GM12878 (cell line): ENCODE measurements at regions of chr1 and their contacts with region 1.

Region 1: DNA sequence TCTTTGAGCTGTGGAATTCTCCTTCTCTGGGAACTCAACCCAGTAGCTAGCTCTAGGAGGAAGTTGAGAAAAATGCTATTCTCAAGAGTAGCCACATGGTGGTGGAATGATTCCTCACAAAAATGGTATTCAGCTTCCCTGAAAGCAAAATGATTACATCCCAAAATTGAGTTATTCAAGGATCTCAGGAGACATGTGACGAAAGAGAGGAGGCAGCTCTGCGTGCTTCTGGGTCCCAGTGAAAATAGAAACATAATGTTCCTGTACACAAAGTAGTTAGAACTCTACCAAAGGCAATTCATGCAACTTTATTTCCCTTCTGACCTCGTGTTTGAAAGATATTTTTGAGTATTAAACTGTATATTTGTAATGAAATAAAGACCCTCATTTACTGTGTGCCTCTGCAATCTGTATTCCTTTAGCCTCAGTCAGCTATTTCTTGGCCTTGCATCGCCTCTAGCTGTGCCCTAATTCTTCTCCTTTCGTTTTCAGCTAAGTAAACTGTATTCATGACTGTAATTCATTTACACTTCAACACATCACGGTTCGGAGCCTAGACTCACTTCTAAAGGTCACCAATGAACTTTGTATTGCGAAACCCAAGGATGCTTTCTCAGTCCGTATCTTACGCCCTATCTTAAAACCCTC is 167.3 kb downstream of the FASLG start:
- DNase-seq: no peak
- ATAC-seq: peak; percentile 65
- H3K4me3 ChIP-seq: no peak overlapping the region
- H3K27ac ChIP-seq: no peak overlapping the region
- H3K4me1 ChIP-seq: peaks cover 4% of the 10 kb centered on the region; the same call in 1 of the 2 replicates
- H3K27me3 ChIP-seq: no peaks in the 10 kb centered on the region
- CTCF ChIP-seq: peak; percentile 47 to 61 (median 51); a peak in 5 of 6 replicates
- EP300 ChIP-seq: no peak
- POLR2A ChIP-seq: no peak
- RAD21 ChIP-seq: peak; percentile 81

Region 2: GRCh38 chr1:172627702-172628101 is 198.5 kb before region 1 on chr1:
- CTCF ChIA-PET with region 1: no interaction called
- POLR2A ChIA-PET with region 1: no interaction called
- RAD21 ChIA-PET with region 1: no interaction called
- SMC1A ChIA-PET with region 1: no interaction called
- in situ Hi-C with region 1: no loop called
- intact Hi-C with region 1: no loop called
- DNase-seq: no peak
- ATAC-seq: peak; percentile 46; the same call in 2 of the 3 replicates
- H3K4me3 ChIP-seq: no peak overlapping the region
- H3K27ac ChIP-seq: no peak overlapping the region
- H3K4me1 ChIP-seq: no peaks in the 10 kb centered on the region
- H3K27me3 ChIP-seq: 0 out of 4 replicates have a peak, but pooled peaks cover 0 to 4% of the 10 kb centered on the region in 2 experiments
- CTCF ChIP-seq: no peak
- EP300 ChIP-seq: no peak
- POLR2A ChIP-seq: no peak
- RAD21 ChIP-seq: no peak

Region 3: GRCh38 chr1:172778456-172779455 is 47.5 kb before region 1 on chr1:
- CTCF ChIA-PET with region 1: interaction called, 10 read pairs
- POLR2A ChIA-PET with region 1: no interaction called
- RAD21 ChIA-PET with region 1: interaction called, 9 read pairs
- SMC1A ChIA-PET with region 1: interaction called, 20 read pairs
- in situ Hi-C with region 1: no loop called
- intact Hi-C with region 1: no loop called
- DNase-seq: peak; percentile 23
- ATAC-seq: peak; percentile 86
- H3K4me3 ChIP-seq: no peak overlapping the region
- H3K27ac ChIP-seq: no peak overlapping the region
- H3K4me1 ChIP-seq: peaks cover 30% of the 10 kb centered on the region
- H3K27me3 ChIP-seq: peaks cover 0 to 8% of the 10 kb centered on the region in 2 experiments; a peak in 3 of 4 replicates
- CTCF ChIP-seq: peak; percentile 19 to 40 (median 28); a peak in 3 of 6 replicates
- EP300 ChIP-seq: no peak
- POLR2A ChIP-seq: no peak
- RAD21 ChIP-seq: peak; percentile 55

Region 4: DNA sequence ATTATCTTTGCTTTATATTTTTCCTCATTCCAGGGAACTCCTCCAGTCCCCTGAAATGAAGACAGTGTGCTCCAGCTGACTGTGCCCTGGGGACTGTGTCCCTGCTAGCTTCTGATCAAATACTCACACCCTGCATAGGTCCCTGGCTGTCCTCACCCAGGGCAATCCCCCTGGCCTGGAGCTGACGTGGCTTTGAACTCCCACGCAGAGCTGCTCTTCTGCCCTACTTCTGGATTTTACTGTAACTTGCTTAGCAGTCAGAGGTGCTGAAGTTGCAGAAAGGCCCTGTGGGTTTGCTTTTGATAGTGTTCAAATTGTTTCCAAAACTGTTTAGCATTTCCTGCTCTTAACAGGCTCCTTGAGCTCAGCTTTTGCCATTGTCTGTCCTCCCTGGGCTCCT is 19.2 kb after region 1 on chr1:
- CTCF ChIA-PET with region 1: interaction called, 17 read pairs
- POLR2A ChIA-PET with region 1: no interaction called
- RAD21 ChIA-PET with region 1: interaction called, 3 read pairs
- SMC1A ChIA-PET with region 1: interaction called, 4 read pairs
- in situ Hi-C with region 1: no loop called
- intact Hi-C with region 1: no loop called
- DNase-seq: no peak
- ATAC-seq: peak; percentile 78
- H3K4me3 ChIP-seq: no peak overlapping the region
- H3K27ac ChIP-seq: no peak overlapping the region
- H3K4me1 ChIP-seq: no peaks in the 10 kb centered on the region
- H3K27me3 ChIP-seq: no peaks in the 10 kb centered on the region; a peak in 1 of 4 replicates
- CTCF ChIP-seq: no peak
- EP300 ChIP-seq: no peak
- POLR2A ChIP-seq: no peak
- RAD21 ChIP-seq: no peak

Region 5: DNA sequence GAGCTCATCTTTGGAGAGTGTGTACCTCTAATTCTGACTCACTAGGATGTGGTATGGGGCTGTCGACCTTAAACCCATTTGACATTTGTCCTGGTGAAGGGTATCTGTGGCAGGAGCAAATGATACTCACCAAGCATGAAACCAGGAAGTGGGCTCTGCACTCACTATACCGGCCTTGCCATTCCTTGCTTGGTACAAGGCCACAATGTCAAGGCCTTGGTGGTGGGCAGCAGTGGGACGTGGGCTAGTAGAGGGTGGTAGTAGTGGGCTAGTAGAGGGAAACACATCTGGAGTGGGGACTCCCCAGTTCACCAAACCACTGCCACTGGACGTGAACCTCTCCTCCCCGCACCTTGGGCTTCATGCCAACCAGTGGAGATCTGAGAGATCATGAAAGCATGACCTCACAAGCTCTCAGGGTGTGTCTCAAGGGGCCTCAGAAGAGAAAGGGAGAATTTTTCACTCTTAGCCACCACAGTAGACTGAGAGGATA is 369.4 kb after region 1 on chr1:
- CTCF ChIA-PET with region 1: interaction called, 414 read pairs
- POLR2A ChIA-PET with region 1: no interaction called
- RAD21 ChIA-PET with region 1: interaction called, 245 read pairs
- SMC1A ChIA-PET with region 1: interaction called, 316 read pairs
- in situ Hi-C with region 1: loop called (anchors 5 kb)
- intact Hi-C with region 1: no loop called
- DNase-seq: peak; percentile 74
- ATAC-seq: peak; percentile 88
- H3K4me3 ChIP-seq: no peak overlapping the region
- H3K27ac ChIP-seq: no peak overlapping the region
- H3K4me1 ChIP-seq: peaks cover 12% of the 10 kb centered on the region
- H3K27me3 ChIP-seq: no peaks in the 10 kb centered on the region
- CTCF ChIP-seq: no peak
- EP300 ChIP-seq: no peak; a peak in 1 of 4 replicates
- POLR2A ChIP-seq: no peak
- RAD21 ChIP-seq: 0 out of 2 replicates have a peak, but pooled peaks have one; percentile 13

Region 6: DNA sequence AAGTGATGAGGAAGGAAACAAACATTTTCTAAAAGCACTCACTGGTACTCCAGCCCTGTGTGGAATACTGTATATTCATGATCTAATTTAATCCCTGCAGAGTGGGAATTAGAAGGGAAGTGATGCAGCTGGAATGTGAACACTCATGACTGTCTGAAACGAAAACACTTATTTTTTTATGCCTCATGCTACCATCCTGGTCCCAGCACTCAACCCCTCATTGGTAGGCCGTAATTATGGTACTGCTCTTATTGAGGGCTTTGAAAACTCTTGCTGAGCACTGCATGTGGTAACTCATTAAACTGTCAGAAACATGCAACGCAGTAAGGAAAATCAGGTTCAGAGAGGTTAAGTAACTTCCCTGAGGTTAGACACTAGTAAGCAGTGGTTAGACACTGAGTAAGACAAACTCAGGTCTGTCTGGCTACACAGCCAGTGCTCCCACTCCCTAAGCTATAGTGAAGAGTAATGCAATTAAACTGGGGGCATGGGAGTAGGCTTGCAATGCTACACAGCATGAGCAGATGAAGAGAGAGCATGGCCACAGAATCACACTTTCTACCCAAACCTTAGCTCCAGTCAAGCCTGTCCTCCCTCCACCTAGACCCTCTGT is 398.2 kb after region 1 on chr1:
- CTCF ChIA-PET with region 1: interaction called, 12 read pairs
- POLR2A ChIA-PET with region 1: no interaction called
- RAD21 ChIA-PET with region 1: no interaction called
- SMC1A ChIA-PET with region 1: interaction called, 3 read pairs
- in situ Hi-C with region 1: no loop called
- intact Hi-C with region 1: no loop called
- DNase-seq: no peak
- ATAC-seq: peak; percentile 13
- H3K4me3 ChIP-seq: no peak overlapping the region
- H3K27ac ChIP-seq: no peak overlapping the region
- H3K4me1 ChIP-seq: peaks cover 38% of the 10 kb centered on the region
- H3K27me3 ChIP-seq: no peaks in the 10 kb centered on the region
- CTCF ChIP-seq: no peak
- EP300 ChIP-seq: no peak
- POLR2A ChIP-seq: no peak
- RAD21 ChIP-seq: no peak